ENCODE measurements at regions of chr4 and their contacts with region 1.

Region 1: DNA sequence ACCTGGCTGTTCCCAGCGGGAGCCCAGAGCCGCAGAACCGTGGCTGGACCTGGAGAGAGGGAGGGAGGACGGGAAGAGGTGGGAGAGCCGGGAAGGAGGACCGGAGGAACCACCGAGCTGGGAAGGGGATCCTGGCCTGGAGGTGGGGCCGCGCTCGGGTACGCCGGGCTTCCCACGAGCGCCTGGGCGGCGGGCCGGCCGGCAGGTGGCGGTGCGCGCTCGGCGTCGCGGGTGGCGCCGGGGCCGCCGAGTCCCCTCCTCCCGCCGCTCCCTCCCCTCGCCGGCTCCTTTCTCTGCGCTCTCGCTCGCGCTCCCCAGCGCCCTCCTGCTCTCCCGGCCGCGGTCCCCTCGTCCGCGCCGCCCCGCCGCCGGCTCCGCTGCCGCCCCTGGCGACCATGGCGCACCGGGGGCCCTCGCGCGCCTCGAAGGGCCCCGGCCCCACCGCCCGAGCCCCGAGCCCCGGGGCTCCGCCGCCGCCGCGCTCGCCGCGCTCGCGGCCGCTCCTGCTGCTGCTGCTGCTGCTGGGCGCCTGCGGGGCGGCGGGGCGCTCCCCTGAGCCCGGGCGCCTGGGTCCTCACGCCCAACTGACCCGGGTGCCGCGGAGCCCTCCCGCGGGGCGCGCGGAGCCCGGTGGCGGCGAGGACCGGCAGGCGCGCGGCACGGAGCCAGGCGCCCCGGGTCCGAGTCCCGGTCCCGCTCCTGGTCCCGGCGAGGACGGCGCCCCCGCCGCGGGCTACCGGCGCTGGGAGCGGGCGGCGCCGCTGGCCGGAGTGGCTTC is at the start of gene SORCS2:
- DNase-seq: peak in 1 of 2 experiments; percentile 82
- H3K4me3 ChIP-seq: peak within 1 kb of the TSS; percentile 71
- H3K27ac ChIP-seq: no peak within 1 kb of the TSS
- H3K4me1 ChIP-seq: peaks cover 37% of the 10 kb centered on the region
- H3K27me3 ChIP-seq: peaks cover 3% of the 10 kb centered on the region
- CTCF ChIP-seq: no peak; the same call in 1 of the 2 replicates
- total RNA-seq, gene SORCS2: 20.7 and 25.8 TPM in 2 replicates

Region 2: DNA sequence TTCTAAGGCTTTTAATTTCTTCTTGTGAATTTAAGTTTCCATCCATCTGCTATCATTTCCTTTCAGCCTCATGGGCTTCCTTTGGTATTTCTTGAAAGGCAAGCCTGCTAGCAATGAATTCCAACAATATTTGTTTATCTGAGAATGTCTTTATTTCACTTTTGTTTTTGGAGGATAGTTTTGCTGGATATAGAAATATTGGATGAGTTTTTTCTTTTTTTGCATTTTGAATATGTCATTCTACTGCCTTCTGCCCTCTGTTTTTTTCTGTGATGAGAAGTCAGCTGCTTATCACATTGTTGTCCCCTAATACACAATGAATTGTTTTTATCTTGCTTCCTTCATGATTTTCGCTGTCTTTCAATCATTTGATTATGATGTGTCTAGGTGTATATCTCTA is 13.3 kb before region 1 on chr4:
- CTCF ChIA-PET with region 1: interaction called, 14 read pairs
- POLR2A ChIA-PET with region 1: no interaction called
- intact Hi-C with region 1: no loop called
- DNase-seq: no peak
- H3K4me3 ChIP-seq: no peak overlapping the region
- H3K27ac ChIP-seq: no peak overlapping the region
- H3K4me1 ChIP-seq: no peaks in the 10 kb centered on the region
- H3K27me3 ChIP-seq: no peaks in the 10 kb centered on the region
- CTCF ChIP-seq: no peak

Region 3: GRCh38 chr4:7223541-7223940 is 31.1 kb after region 1 on chr4:
- CTCF ChIA-PET with region 1: interaction called, 4 read pairs
- POLR2A ChIA-PET with region 1: interaction called, 3 read pairs
- intact Hi-C with region 1: loop called (anchors 1 kb)
- DNase-seq: peak; percentile 60 to 69
- H3K4me3 ChIP-seq: no peak overlapping the region
- H3K27ac ChIP-seq: 0 out of 2 replicates have a peak overlapping the region, but pooled peaks have one; percentile 2
- H3K4me1 ChIP-seq: 0 out of 2 replicates have a peak, but pooled peaks cover 5% of the 10 kb centered on the region
- H3K27me3 ChIP-seq: no peaks in the 10 kb centered on the region
- CTCF ChIP-seq: no peak

Region 4: DNA sequence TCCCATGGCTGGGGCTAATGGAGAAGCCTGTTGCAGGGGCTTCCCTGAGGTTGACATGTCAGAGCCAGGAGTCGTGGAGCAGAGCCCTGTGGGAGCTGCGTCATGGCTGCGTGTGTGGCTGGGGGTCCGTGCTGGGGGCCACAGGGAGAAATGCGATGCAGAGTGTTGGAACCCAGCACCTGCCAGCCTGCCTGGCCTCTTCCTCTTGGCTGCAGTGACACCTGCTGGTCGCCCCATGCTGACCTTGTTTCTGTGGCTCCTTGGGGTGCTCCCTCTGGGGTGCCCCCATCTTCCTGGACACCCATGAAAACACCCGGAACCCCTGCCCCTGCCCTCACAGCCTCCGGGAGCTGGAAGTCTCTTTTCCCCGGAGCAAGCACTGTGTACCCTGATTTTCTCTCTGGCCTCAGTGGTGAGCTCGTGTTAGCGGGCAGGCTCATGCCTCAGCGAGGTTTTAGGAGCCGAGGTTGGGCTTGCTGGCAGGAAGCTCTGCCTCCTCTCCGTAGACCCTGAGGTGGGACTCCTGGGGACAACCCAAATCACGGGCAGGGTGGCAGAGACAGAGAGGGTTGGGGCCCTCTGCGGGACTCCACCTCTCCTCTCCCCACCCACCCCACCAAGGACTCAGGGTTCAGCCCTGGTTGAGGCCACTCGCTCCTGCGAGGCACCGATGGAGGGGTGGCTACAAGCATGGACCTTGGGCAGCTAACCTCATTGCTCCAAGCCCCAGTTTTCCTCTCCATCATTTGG is 103.6 kb after region 1 on chr4:
- CTCF ChIA-PET with region 1: interaction called, 3 read pairs
- POLR2A ChIA-PET with region 1: no interaction called
- intact Hi-C with region 1: loop called (anchors 1 kb)
- DNase-seq: peak in 1 of 2 experiments; percentile 41
- H3K4me3 ChIP-seq: no peak overlapping the region
- H3K27ac ChIP-seq: no peak overlapping the region
- H3K4me1 ChIP-seq: no peaks in the 10 kb centered on the region
- H3K27me3 ChIP-seq: no peaks in the 10 kb centered on the region
- CTCF ChIP-seq: peak; percentile 78

Region 5: GRCh38 chr4:7462509-7462971 is 270.1 kb after region 1 on chr4:
- CTCF ChIA-PET with region 1: no interaction called
- POLR2A ChIA-PET with region 1: no interaction called
- intact Hi-C with region 1: loop called (anchors 5 kb)
- DNase-seq: peak in 1 of 2 experiments; percentile 44
- H3K4me3 ChIP-seq: no peak overlapping the region
- H3K27ac ChIP-seq: no peak overlapping the region
- H3K4me1 ChIP-seq: no peaks in the 10 kb centered on the region
- H3K27me3 ChIP-seq: no peaks in the 10 kb centered on the region
- CTCF ChIP-seq: no peak; the same call in 1 of the 2 replicates

Region 6: DNA sequence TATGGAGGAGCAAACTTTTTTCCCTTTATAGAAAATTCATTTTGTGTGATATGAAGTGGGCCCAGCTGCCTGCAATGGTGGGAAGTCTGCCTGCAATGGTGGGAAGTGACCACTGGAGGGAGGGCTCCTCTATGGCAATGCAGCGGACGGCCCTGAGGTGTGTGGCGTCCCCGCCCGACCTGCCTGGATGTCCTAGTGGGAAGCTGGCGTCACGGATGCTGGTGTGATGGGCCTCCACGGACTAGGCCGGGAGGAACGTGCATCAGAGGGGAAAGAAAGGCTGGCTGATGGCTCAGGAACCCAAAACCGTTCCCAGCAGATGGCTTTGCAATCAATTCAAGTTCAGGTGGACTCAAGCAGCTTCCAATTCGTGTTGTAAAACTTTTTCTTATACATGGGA is 569.3 kb after region 1 on chr4:
- CTCF ChIA-PET with region 1: no interaction called
- POLR2A ChIA-PET with region 1: no interaction called
- intact Hi-C with region 1: loop called (anchors 5 kb)
- DNase-seq: peak in 1 of 2 experiments; percentile 46
- H3K4me3 ChIP-seq: no peak overlapping the region
- H3K27ac ChIP-seq: no peak overlapping the region
- H3K4me1 ChIP-seq: peaks cover 13% of the 10 kb centered on the region; the same call in 1 of the 2 replicates
- H3K27me3 ChIP-seq: no peaks in the 10 kb centered on the region
- CTCF ChIP-seq: peak; percentile 63

Region 7: DNA sequence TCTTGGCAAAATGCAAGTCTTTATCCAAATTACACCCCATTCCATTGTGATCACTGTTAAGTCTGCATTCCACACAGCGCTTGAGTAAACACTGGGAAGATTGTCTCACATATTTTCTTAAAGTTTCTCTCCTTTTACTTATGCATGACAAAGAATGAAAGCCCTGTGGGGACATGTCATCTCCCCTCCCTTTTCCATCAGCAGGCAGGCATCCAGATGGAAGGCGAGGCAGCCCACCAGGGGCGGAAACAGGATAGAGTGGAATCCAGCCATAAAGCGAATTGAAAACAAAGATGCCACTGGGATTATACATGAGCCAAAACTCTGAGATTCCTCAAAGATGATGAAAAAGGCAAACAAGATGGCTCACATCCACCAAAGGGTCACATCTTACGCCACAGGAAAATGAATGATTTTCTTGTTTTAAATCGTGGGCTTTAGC is 669.0 kb after region 1 on chr4:
- CTCF ChIA-PET with region 1: no interaction called
- POLR2A ChIA-PET with region 1: interaction called, 15 read pairs
- intact Hi-C with region 1: no loop called
- DNase-seq: peak; percentile 56 to 78
- H3K4me3 ChIP-seq: no peak overlapping the region
- H3K27ac ChIP-seq: peak overlapping the region; percentile 37; the same call in 1 of the 2 replicates
- H3K4me1 ChIP-seq: 0 out of 2 replicates have a peak, but pooled peaks cover 5% of the 10 kb centered on the region
- H3K27me3 ChIP-seq: no peaks in the 10 kb centered on the region
- CTCF ChIP-seq: no peak